WTC11 (cell line): ENCODE measurements at regions of chr15 and their contacts with region 1.

Region 1: GRCh38 chr15:78108299-78109084 is 16.1 kb downstream of the SH2D7 start:
- DNase-seq: peak; percentile 81
- ATAC-seq: peak; percentile 89
- H3K4me3 Mint-ChIP-seq: no peak overlapping the region
- H3K27ac Mint-ChIP-seq: no peak overlapping the region
- H3K4me1 Mint-ChIP-seq: peaks cover 3% of the 10 kb centered on the region; the same call in 1 of the 2 replicates
- H3K27me3 Mint-ChIP-seq: no peaks in the 10 kb centered on the region
- CTCF ChIP-seq: peak; percentile 61

Region 2: GRCh38 chr15:77959432-77959879 is 149.0 kb before region 1 on chr15:
- CTCF ChIA-PET with region 1: interaction called, 50 read pairs
- POLR2A ChIA-PET with region 1: no interaction called
- DNase-seq: peak; percentile 95
- ATAC-seq: peak; percentile 99
- H3K4me3 Mint-ChIP-seq: no peak overlapping the region
- H3K27ac Mint-ChIP-seq: no peak overlapping the region
- H3K4me1 Mint-ChIP-seq: peaks cover 14% of the 10 kb centered on the region
- H3K27me3 Mint-ChIP-seq: peaks cover 35% of the 10 kb centered on the region
- CTCF ChIP-seq: peak; percentile 90

Region 3: GRCh38 chr15:78007911-78008886 is 100.3 kb before region 1 on chr15:
- CTCF ChIA-PET with region 1: interaction called, 34 read pairs
- POLR2A ChIA-PET with region 1: no interaction called
- DNase-seq: no peak
- ATAC-seq: no peak
- H3K4me3 Mint-ChIP-seq: no peak overlapping the region
- H3K27ac Mint-ChIP-seq: no peak overlapping the region; the same call in 1 of the 2 replicates
- H3K4me1 Mint-ChIP-seq: peaks cover 10% of the 10 kb centered on the region
- H3K27me3 Mint-ChIP-seq: no peaks in the 10 kb centered on the region
- CTCF ChIP-seq: no peak

Region 4: DNA sequence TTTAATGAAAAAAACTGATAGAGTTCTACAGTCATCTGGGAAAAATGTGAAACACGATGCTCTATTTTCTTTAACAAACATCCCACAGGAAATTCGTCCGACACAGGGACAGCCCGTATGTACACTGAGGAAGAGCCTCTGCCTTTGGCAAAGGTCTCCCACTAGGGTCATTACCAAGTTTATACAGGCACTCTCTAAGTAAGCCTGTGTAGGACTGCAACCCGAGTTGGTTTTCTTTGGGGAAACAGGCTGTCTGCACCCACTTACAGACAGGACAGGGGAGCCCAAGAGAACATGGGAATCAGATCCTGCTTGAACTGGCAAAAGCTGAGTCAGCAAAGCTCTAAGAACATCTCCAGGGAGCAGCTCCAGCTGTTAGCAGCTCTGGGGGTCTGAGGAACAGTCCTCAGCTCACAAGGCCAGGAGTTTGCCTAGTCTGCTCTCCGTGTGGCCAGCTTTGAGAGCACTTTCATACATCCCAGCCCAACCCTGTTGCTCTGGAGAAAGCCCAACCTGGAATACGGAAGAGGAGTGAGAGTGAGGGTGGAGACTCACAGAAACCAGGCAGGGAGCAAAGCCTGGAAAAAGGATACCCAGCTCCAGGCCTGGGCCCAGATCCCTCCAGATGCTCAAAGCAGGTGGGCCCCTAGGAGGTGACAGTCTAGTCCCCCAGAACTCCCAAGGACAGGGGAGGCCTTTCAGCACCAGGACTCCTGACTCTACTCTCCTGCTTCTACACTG is 32.8 kb before region 1 on chr15:
- CTCF ChIA-PET with region 1: interaction called, 12 read pairs
- POLR2A ChIA-PET with region 1: no interaction called
- DNase-seq: peak; percentile 33
- ATAC-seq: peak; percentile 62
- H3K4me3 Mint-ChIP-seq: peak overlapping the region; percentile 96
- H3K27ac Mint-ChIP-seq: peak overlapping the region; percentile 78
- H3K4me1 Mint-ChIP-seq: peaks cover 27% of the 10 kb centered on the region
- H3K27me3 Mint-ChIP-seq: peaks cover 6% of the 10 kb centered on the region
- CTCF ChIP-seq: no peak

Region 5: GRCh38 chr15:78120523-78120922 is 12.0 kb after region 1 on chr15:
- CTCF ChIA-PET with region 1: interaction called, 28 read pairs
- POLR2A ChIA-PET with region 1: interaction called, 5 read pairs
- DNase-seq: peak; percentile 33
- ATAC-seq: peak; percentile 81
- H3K4me3 Mint-ChIP-seq: 0 out of 2 replicates have a peak overlapping the region, but pooled peaks have one; percentile 24
- H3K27ac Mint-ChIP-seq: peak overlapping the region; percentile 77
- H3K4me1 Mint-ChIP-seq: peaks cover 21% of the 10 kb centered on the region
- H3K27me3 Mint-ChIP-seq: no peaks in the 10 kb centered on the region
- CTCF ChIP-seq: no peak

Region 6: GRCh38 chr15:78149068-78149804 is 40.7 kb after region 1 on chr15 and contains the start of gene IDH3A:
- CTCF ChIA-PET with region 1: interaction called, 15 read pairs
- POLR2A ChIA-PET with region 1: no interaction called
- DNase-seq: peak; percentile 99
- ATAC-seq: peak; percentile 97
- H3K4me3 Mint-ChIP-seq: peak within 1 kb of the TSS; percentile 98
- H3K27ac Mint-ChIP-seq: peak within 1 kb of the TSS; percentile 94
- H3K4me1 Mint-ChIP-seq: peaks cover 23% of the 10 kb centered on the region
- H3K27me3 Mint-ChIP-seq: peaks cover 4% of the 10 kb centered on the region; the same call in 1 of the 2 replicates
- CTCF ChIP-seq: no peak
- total RNA-seq, gene IDH3A: 37.8 to 56.6 TPM (median 38.5 TPM) in 3 replicates

Region 7: GRCh38 chr15:78241007-78241406 is 132.5 kb after region 1 on chr15:
- CTCF ChIA-PET with region 1: interaction called, 46 read pairs
- POLR2A ChIA-PET with region 1: interaction called, 6 read pairs
- DNase-seq: peak; percentile 95
- ATAC-seq: peak; percentile 76
- H3K4me3 Mint-ChIP-seq: no peak overlapping the region
- H3K27ac Mint-ChIP-seq: no peak overlapping the region
- H3K4me1 Mint-ChIP-seq: peaks cover 32% of the 10 kb centered on the region
- H3K27me3 Mint-ChIP-seq: no peaks in the 10 kb centered on the region; the same call in 1 of the 2 replicates
- CTCF ChIP-seq: peak; percentile 83

Region 8: GRCh38 chr15:78315686-78316282 is 207.3 kb after region 1 on chr15:
- CTCF ChIA-PET with region 1: no interaction called
- POLR2A ChIA-PET with region 1: no interaction called
- DNase-seq: peak; percentile 75
- ATAC-seq: peak; percentile 91
- H3K4me3 Mint-ChIP-seq: no peak overlapping the region
- H3K27ac Mint-ChIP-seq: peak overlapping the region; percentile 95
- H3K4me1 Mint-ChIP-seq: peaks cover 36% of the 10 kb centered on the region
- H3K27me3 Mint-ChIP-seq: no peaks in the 10 kb centered on the region
- CTCF ChIP-seq: no peak

Region 9: DNA sequence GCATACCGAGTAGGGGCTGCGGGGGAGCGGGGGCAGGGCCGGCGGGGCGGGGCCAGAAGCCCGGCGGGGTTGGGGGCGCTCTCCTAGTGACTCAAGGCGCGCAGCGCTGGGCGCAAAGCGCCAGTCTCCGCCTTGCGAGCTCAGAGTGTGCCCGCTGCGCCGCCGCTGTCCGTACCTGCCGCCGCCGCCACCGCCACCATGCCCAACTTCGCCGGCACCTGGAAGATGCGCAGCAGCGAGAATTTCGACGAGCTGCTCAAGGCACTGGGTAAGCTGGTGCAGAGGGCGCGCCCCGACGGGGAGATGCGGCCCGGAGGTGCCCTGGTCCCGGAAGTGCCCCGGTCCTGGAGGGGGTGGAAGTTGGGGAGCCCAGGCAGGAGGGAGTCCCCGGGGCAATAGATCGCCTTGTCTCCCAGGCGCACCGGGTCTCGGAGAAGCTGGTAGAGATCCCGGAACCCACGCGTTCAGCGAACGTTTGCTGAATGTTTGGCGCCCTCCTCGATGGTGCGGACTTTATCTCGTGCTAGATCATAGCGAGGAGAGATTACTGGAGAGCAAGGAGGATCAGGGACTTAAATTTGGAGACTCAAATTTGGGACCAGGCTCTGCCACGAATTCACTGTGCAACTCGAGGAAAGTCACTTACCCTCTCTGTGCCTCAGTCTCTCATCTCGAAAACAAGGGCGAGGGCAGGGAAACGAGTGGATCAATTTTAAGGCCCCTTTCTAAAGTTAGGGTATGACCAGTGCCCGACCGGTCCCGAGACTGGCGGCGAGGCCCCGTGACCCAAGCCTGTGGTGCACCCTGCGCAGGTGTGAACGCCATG is 232.0 kb after region 1 on chr15 and contains the start of gene CRABP1:
- CTCF ChIA-PET with region 1: no interaction called
- POLR2A ChIA-PET with region 1: no interaction called
- DNase-seq: peak; percentile 76
- ATAC-seq: peak; percentile 75
- H3K4me3 Mint-ChIP-seq: peak within 1 kb of the TSS; percentile 80
- H3K27ac Mint-ChIP-seq: no peak within 1 kb of the TSS
- H3K4me1 Mint-ChIP-seq: peaks cover 28% of the 10 kb centered on the region
- H3K27me3 Mint-ChIP-seq: peaks cover 32% of the 10 kb centered on the region
- CTCF ChIP-seq: no peak
- total RNA-seq, gene CRABP1: 374 to 444 TPM (median 377 TPM) in 3 replicates